HEK293 (cell line): ENCODE measurements at regions of chr10 and their contacts with region 1.

Region 1: GRCh38 chr10:61140765-61141392 is 196.9 kb upstream of the RHOBTB1 start:
- H3K4me3 ChIP-seq: no peak overlapping the region
- H3K27ac ChIP-seq: no peak overlapping the region
- H3K4me1 ChIP-seq: no peaks in the 10 kb centered on the region
- CTCF ChIP-seq: peak; percentile 32; the same call in 1 of the 2 replicates

Region 2: DNA sequence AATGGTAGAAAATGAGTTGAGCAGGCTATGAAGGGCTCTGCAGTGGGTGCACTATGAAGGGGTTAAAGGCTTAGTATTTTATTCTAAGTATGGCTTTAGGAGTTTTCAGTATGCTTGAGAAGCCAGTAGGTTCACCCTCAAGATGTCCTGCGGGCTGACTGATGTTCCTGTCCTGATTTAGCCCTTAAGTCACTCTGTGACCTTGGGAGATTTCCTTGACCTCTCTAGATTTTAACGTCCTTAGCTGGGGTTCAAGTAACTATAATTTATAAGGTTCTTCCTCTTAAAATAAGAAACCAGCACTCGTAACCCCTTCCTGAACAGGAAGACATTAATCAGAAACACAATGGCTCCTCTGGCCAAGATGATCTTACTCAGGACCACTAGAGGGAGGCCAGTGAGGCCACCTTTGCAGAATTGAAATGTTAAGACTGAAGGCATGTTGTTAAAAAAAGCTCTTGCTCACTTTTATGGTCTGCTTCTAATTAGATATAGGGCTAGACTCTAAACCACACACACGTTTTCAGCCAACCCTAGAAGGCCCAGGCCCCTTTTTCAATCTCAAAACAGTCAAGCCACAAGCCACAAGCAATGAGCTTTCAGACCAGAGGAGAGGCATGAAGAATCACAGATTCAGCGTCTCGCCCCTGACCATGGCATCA is 320.7 kb before region 1 on chr10:
- CTCF ChIA-PET with region 1: interaction called, 10 read pairs
- POLR2A ChIA-PET with region 1: no interaction called
- H3K4me3 ChIP-seq: no peak overlapping the region
- H3K27ac ChIP-seq: no peak overlapping the region
- H3K4me1 ChIP-seq: no peaks in the 10 kb centered on the region; the same call in 1 of the 2 replicates
- CTCF ChIP-seq: 0 out of 2 replicates have a peak, but pooled peaks have one; percentile 19

Region 3: DNA sequence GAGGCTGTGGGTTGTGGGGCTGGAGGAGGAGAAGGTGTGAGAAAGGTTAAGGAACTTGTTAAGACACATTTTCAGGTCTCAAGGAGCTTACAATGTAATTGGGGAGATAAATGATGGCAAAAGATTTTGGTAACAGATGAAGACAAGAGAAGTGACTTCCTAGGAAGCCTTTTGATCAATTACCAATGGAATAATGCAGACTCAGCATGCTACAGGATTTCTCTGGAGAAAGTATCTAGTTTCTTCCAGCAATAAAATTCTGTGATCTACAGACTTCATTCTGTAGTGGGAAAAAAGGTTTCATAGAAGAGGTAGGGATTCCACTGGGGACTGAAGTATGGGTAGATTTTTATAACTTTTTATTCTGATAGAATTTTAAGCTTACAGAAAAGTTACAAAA is 12.7 kb before region 1 on chr10:
- CTCF ChIA-PET with region 1: interaction called, 12 read pairs
- POLR2A ChIA-PET with region 1: no interaction called
- H3K4me3 ChIP-seq: no peak overlapping the region
- H3K27ac ChIP-seq: no peak overlapping the region
- H3K4me1 ChIP-seq: peaks cover 3% of the 10 kb centered on the region; the same call in 1 of the 2 replicates
- CTCF ChIP-seq: no peak